ENCODE measurements at regions of chr2 and their contacts with region 1.

Region 1: DNA sequence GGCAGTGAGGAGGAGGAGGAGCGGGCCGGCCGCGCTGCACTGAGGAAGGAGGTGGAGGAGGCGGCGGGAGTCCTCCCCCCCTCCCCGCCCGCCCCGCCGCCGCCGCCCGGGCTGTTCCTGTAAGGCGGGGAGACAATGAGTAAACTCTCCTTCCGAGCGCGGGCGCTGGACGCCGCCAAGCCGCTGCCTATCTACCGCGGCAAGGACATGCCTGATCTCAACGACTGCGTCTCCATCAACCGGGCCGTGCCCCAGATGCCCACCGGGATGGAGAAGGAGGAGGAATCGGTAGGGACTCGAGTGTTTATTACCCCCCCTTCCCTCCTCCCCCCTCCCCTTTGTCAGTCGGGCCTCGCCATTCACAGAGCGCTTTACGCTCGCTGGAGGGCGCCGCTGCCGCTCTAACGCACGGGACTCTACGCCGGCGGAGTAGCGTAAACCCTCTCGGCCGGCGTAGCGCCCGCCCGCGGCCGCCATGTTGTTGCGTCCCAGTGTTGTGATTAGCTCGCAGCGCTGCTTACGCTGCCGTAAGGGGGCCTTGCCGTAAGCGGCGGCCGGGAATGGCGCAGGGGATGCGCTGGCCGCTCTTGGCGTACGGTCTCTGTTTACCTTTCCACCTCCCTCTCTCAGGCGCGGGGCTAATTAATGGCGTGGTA is 460 bp downstream of the EPC2 start:
- DNase-seq: peak; percentile 98
- H3K4me3 Mint-ChIP-seq: peak overlapping the region; percentile 86
- H3K27ac Mint-ChIP-seq: peak overlapping the region; percentile 98
- H3K4me1 Mint-ChIP-seq: peaks cover 31% of the 10 kb centered on the region
- H3K27me3 Mint-ChIP-seq: peaks cover 14% of the 10 kb centered on the region

Region 2: DNA sequence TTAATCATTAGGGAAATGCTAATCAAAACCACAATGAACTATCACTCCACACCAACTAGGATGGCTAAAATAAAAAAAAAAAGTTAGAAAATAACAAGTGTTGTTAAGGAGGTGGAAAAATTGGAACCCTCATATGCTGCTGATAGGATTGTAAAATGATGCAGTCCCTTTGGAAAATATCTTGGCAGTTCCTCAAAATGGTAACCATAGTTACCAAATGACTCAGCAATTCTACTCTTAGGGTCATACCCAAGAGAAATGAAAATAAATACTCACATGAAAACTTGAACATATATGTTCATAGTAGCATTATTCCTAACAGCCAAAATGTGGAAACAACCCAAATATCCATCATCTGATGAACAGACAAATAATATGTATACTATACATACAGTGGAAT is 815.9 kb before region 1 on chr2:
- intact Hi-C with region 1: no loop called
- DNase-seq: no peak
- H3K4me3 Mint-ChIP-seq: no peak overlapping the region
- H3K27ac Mint-ChIP-seq: no peak overlapping the region
- H3K4me1 Mint-ChIP-seq: no peaks in the 10 kb centered on the region
- H3K27me3 Mint-ChIP-seq: peaks cover 13% of the 10 kb centered on the region

Region 3: DNA sequence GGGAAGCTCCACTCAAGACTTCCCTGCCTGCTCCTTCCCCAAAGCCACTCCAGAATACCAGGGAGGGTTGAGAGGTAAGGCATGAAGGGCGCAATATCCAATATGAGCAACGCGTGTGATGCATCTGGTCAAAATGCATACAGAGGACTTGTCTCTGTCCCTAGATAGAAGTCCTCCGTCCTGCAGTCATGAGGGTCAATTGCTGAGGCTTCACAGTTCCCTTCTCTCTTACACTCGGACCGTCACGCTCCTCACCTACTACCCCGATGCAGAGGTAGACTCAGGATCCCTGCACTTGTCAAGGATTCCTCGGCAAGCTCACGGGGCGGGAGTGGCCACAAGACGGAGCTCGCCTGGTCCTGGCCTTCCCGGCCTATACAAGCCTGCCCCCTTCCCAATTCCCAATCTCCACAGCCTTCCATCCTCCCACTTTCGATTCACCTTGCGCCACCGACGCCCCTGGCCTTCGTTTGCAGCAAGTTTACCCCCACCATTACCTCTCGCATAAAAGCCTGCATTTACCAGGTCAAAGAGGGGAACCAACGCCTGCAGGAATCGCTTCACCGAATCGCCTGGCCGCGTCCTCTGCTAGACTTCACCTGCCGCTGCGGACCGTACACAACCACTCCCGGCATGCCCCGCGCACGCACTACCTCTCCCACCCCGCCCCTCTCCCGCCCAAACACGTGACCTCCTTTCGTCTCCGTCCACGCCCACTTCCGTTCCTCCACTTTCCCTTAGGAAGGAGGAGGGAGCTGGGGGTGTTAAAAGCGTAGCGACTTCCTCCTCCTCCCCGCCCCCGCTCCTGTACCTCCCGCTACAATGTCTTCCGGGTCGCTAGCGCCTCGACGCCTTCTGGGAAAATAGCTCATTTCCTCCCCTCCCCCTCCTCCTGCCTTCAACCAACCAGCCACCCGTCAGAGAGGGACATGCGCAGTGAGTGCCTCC is 624.6 kb before region 1 on chr2 and contains the start of gene ORC4:
- intact Hi-C with region 1: loop called (anchors 1 kb)
- DNase-seq: peak; percentile 98
- H3K4me3 Mint-ChIP-seq: peak within 1 kb of the TSS; percentile 94
- H3K27ac Mint-ChIP-seq: peak within 1 kb of the TSS; percentile 93
- H3K4me1 Mint-ChIP-seq: peaks cover 45% of the 10 kb centered on the region
- H3K27me3 Mint-ChIP-seq: no peaks in the 10 kb centered on the region
- total RNA-seq, gene ORC4: 27.0 and 36.2 TPM in 2 replicates

Region 4: DNA sequence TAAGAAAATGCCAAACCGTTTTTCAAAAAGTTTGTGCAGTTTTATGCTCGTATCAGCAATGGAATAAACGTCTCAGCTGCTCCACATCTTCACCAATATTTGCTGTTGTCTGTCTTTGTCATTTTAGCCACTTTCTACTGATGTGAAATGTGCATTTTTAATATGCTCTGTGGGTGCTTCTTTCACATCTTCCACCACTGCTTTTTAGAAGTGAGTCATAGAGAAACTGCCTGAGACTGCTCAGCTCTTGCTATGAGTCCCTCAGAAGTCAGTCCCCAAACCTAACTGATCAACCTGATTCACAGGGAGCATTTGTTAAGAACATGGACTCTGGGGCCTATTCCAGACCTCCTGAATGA is 41.5 kb before region 1 on chr2:
- intact Hi-C with region 1: loop called (anchors 1 kb)
- DNase-seq: peak; percentile 77
- H3K4me3 Mint-ChIP-seq: no peak overlapping the region
- H3K27ac Mint-ChIP-seq: peak overlapping the region; percentile 93
- H3K4me1 Mint-ChIP-seq: peaks cover 18% of the 10 kb centered on the region
- H3K27me3 Mint-ChIP-seq: peaks cover 8% of the 10 kb centered on the region

Region 5: GRCh38 chr2:148674063-148675020 is 29.3 kb after region 1 on chr2:
- intact Hi-C with region 1: loop called (anchors 2 kb)
- DNase-seq: peak; percentile 83
- H3K4me3 Mint-ChIP-seq: no peak overlapping the region
- H3K27ac Mint-ChIP-seq: no peak overlapping the region
- H3K4me1 Mint-ChIP-seq: peaks cover 24% of the 10 kb centered on the region
- H3K27me3 Mint-ChIP-seq: no peaks in the 10 kb centered on the region

Region 6: DNA sequence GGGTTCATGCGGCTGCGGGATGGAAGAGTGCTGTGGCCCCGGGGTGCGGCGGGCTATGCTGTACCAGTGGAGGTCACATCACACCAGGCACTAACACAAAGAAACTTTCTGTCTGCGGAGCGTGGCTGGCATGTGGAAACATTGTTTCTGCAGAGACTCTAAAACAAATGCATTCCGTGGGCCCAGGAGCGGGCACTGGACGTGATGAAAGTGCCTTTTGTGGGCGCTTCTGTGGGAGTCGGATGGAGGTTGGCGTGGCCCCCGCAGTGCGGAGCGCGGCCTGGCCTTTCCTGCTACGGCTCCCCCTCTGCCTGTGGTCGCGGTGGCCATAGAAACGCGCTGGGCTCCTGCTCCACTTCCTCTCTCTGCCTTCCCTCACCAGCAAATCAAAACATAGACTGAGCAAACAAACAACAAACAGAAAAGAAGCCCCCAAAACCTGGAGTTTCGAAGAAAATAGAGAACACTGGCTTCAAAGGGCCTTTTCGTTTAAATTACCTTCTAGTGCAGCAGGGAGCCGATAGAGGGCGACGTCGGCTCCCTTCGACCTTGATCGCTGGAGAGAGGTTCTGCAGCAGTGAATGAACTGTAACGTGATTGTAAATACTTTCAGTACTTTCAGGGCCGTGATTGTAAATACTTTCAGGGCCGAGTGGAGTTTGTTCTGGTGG is 281.4 kb after region 1 on chr2:
- intact Hi-C with region 1: loop called (anchors 5 kb)
- DNase-seq: peak; percentile 88
- H3K4me3 Mint-ChIP-seq: peak overlapping the region; percentile 88
- H3K27ac Mint-ChIP-seq: peak overlapping the region; percentile 88
- H3K4me1 Mint-ChIP-seq: peaks cover 21% of the 10 kb centered on the region
- H3K27me3 Mint-ChIP-seq: no peaks in the 10 kb centered on the region